Gastrocnemius medialis (tissue), 4 donors: ENCODE measurements at regions of chr6 and their contacts with region 1.

Region 1: GRCh38 chr6:147285087-147285855 is 81.1 kb downstream of the STXBP5 start:
- DNase-seq: no peak
- ATAC-seq: peak; percentile 52 to 82
- H3K4me3 ChIP-seq: no peak overlapping the region
- H3K27ac ChIP-seq: peak overlapping the region in 1 of 4 donors; percentile 7
- H3K4me1 ChIP-seq: peaks cover 9 to 19% of the 10 kb centered on the region in 2 donors
- H3K27me3 ChIP-seq: no peaks in the 10 kb centered on the region
- CTCF ChIP-seq: peak in 3 of 5 experiments; percentile 46 to 63 (median 55)
- POLR2A ChIP-seq: no peak

Region 2: DNA sequence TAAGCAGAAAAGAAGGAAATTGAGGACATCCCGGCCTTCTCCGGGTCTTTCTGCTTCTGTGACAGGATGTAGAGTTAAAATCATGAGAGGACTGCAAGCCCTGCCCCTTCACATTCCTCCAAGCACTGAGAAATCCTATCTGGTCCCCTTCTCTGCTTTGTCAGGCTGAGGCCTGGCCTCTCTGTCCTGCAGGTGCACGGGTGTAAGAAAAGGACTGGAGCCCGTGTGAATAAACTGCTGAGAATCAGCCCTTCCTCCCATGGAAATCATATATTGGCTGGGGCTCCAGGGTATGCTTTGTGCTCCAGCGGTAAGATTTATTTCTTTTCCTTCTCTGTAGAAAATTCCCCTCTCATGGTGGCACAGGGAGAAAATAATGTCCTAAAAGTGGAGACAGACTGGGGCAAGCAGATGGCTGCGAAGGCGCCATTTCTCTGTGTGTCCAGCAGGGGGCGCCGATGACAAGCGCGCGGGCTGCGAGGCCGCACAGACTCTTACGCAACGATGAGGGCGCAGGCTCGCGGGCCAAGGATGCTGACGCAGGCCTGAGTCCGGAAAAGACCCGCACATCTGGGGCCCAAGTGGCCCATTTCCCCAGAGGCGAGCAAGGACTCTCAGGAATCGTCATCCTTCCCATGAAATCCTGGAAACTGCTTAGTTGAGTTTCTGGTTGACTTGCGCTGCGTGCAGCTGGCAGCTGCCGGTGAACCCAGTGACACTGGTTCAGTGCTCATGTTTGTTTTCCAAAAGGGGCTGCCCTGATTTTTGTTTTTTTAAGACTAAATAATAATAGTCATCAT is 427.9 kb before region 1 on chr6:
- in situ Hi-C with region 1: loop called (anchors 10 kb)
- intact Hi-C with region 1: loop called (anchors 1 kb)
- DNase-seq: peak; percentile 64
- ATAC-seq: peak; percentile 83 to 92
- H3K4me3 ChIP-seq: peak overlapping the region; percentile 23 to 45 (median 36)
- H3K27ac ChIP-seq: peak overlapping the region in 3 of 4 donors; percentile 10 to 44 (median 25)
- H3K4me1 ChIP-seq: peaks cover 0 to 3% of the 10 kb centered on the region in 2 donors
- H3K27me3 ChIP-seq: no peaks in the 10 kb centered on the region
- CTCF ChIP-seq: peak; percentile 93 to 98 (median 94)
- POLR2A ChIP-seq: no peak

Region 3: GRCh38 chr6:147366290-147366689 is 81.0 kb after region 1 on chr6:
- in situ Hi-C with region 1: no loop called
- intact Hi-C with region 1: no loop called
- DNase-seq: no peak
- ATAC-seq: no peak
- H3K4me3 ChIP-seq: no peak overlapping the region
- H3K27ac ChIP-seq: no peak overlapping the region
- H3K4me1 ChIP-seq: no peaks in the 10 kb centered on the region
- H3K27me3 ChIP-seq: no peaks in the 10 kb centered on the region
- CTCF ChIP-seq: no peak
- POLR2A ChIP-seq: no peak